ENCODE measurements at regions of chr2 and their contacts with region 1.

Region 1: GRCh38 chr2:71545572-71546274 is 92.4 kb downstream of the DYSF start:
- DNase-seq: peak in 2 of 5 donors; percentile 30 to 45
- ATAC-seq: peak; percentile 60 to 76 (median 68)
- H3K4me3 ChIP-seq: peak overlapping the region in 6 of 12 donors; percentile 6 to 27 (median 20)
- H3K27ac ChIP-seq: peak overlapping the region in 11 of 12 donors; percentile 33 to 71 (median 63)
- H3K4me1 ChIP-seq: peaks cover 0 to 15% (median 8%) of the 10 kb centered on the region in 12 donors
- H3K27me3 ChIP-seq: no peaks in the 10 kb centered on the region
- CTCF ChIP-seq: peak; percentile 51 to 81 (median 73)
- POLR2A ChIP-seq: no peak

Region 2: GRCh38 chr2:71609958-71610357 is 64.2 kb after region 1 on chr2:
- intact Hi-C with region 1: loop called in 2 of 10 experiments (anchors 5 to 10 kb)
- DNase-seq: peak in 1 of 5 donors; percentile 7
- ATAC-seq: peak in 1 of 4 donors; percentile 15
- H3K4me3 ChIP-seq: no peak overlapping the region
- H3K27ac ChIP-seq: no peak overlapping the region
- H3K4me1 ChIP-seq: peaks cover 8 to 44% (median 19%) of the 10 kb centered on the region in 12 donors
- H3K27me3 ChIP-seq: no peaks in the 10 kb centered on the region
- CTCF ChIP-seq: peak in 10 of 12 donors; percentile 18 to 61 (median 40)
- POLR2A ChIP-seq: no peak

Region 3: GRCh38 chr2:71637168-71637567 is 91.4 kb after region 1 on chr2:
- intact Hi-C with region 1: no loop called
- DNase-seq: peak in 1 of 5 donors; percentile 26
- ATAC-seq: peak in 2 of 4 donors; percentile 37 to 53
- H3K4me3 ChIP-seq: no peak overlapping the region
- H3K27ac ChIP-seq: no peak overlapping the region
- H3K4me1 ChIP-seq: peaks cover 0 to 38% (median 0%) of the 10 kb centered on the region in 12 donors
- H3K27me3 ChIP-seq: no peaks in the 10 kb centered on the region
- CTCF ChIP-seq: no peak
- POLR2A ChIP-seq: no peak

Region 4: GRCh38 chr2:71923887-71924533 is 378.3 kb after region 1 on chr2:
- intact Hi-C with region 1: loop called in 5 of 10 experiments (anchors 5 to 10 kb)
- DNase-seq: peak in 3 of 5 donors; percentile 53 to 68 (median 59)
- ATAC-seq: peak; percentile 37 to 83 (median 74)
- H3K4me3 ChIP-seq: no peak overlapping the region
- H3K27ac ChIP-seq: no peak overlapping the region
- H3K4me1 ChIP-seq: no peaks in the 10 kb centered on the region
- H3K27me3 ChIP-seq: no peaks in the 10 kb centered on the region
- CTCF ChIP-seq: peak; percentile 77 to 87 (median 84)
- POLR2A ChIP-seq: no peak

Region 5: GRCh38 chr2:71995067-71995665 is 449.4 kb after region 1 on chr2:
- intact Hi-C with region 1: loop called in 4 of 10 experiments (anchors 5 to 10 kb)
- DNase-seq: no peak
- ATAC-seq: no peak
- H3K4me3 ChIP-seq: no peak overlapping the region
- H3K27ac ChIP-seq: no peak overlapping the region
- H3K4me1 ChIP-seq: no peaks in the 10 kb centered on the region
- H3K27me3 ChIP-seq: peaks cover 0 to 9% (median 0%) of the 10 kb centered on the region in 9 donors
- CTCF ChIP-seq: peak in 10 of 12 donors; percentile 9 to 53 (median 36)
- POLR2A ChIP-seq: no peak

Region 6: GRCh38 chr2:72150157-72150865 is 604.6 kb after region 1 on chr2:
- intact Hi-C with region 1: loop called in 9 of 10 experiments (anchors 2 to 5 kb)
- DNase-seq: peak; percentile 73 to 80 (median 76)
- ATAC-seq: peak; percentile 75 to 86 (median 80)
- H3K4me3 ChIP-seq: peak overlapping the region in 9 of 12 donors; percentile 48 to 65 (median 56)
- H3K27ac ChIP-seq: no peak overlapping the region
- H3K4me1 ChIP-seq: peaks cover 7 to 49% (median 41%) of the 10 kb centered on the region in 12 donors
- H3K27me3 ChIP-seq: peaks cover 15 to 76% (median 48%) of the 10 kb centered on the region in 9 donors
- CTCF ChIP-seq: peak; percentile 61 to 89 (median 85)
- POLR2A ChIP-seq: no peak

Region 7: DNA sequence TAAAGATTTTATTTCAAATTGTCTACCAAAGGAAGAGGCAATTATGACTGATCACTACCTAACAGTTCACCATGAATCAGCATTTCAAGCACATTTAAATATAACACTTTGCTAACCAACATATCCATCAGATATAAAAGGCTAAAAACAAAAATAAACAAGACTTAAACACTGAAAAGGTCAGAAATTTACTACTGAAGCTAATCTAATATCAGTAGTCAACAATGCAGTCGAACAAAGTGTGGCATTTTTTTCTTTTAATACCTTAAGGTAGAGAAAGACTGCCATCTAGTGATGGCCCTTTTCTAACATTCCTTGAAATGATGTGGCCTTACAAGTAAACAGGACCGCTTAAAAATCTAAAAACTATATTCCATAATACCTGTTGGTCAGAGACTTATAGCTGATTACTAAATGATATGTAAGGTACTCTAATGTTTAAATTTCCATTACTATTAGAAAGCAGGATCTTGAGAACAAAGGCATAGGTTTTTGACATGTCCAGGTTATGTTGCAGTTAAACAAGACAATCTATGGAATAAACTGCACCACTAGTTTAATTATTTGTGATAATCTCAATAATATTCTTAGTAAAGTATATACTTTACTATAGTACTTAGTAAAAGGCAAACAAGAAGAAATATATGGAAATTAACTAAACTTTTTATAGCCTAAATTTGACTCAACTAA is 1200.1 kb after region 1 on chr2:
- intact Hi-C with region 1: loop called in 6 of 10 experiments (anchors 5 to 10 kb)
- DNase-seq: no peak
- ATAC-seq: peak in 2 of 4 donors; percentile 55 to 63
- H3K4me3 ChIP-seq: no peak overlapping the region
- H3K27ac ChIP-seq: peak overlapping the region in 1 of 12 donors; percentile 3
- H3K4me1 ChIP-seq: peaks cover 0 to 42% (median 9%) of the 10 kb centered on the region in 12 donors
- H3K27me3 ChIP-seq: no peaks in the 10 kb centered on the region
- CTCF ChIP-seq: peak; percentile 42 to 79 (median 72)
- POLR2A ChIP-seq: no peak

Measured in heart left ventricle (tissue), 16 donors.